ENCODE measurements at regions of chr1 and their contacts with region 1.

Region 1: GRCh38 chr1:215606564-215607168 is 39.6 kb downstream of the KCTD3 start:
- DNase-seq: no peak
- CTCF ChIP-seq: no peak

Region 2: DNA sequence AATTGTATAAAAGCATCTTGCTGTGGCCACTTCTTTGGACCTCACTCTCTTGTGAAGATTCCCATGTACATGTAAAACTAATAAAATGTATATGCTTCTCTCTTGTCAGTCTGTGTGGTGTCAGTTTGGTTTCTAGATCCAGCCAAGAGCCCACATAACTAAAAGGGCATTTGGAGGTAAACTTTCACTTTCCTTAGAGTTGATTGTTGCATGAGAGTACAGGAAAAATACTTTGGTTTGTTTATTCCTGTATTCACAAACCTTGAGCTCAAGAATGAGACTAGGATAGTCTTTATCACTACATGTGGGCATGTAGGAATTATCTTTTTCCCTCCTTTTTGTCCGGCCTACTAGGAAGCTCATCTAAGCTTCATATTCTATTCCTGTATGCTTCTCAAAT is 11.3 kb after region 1 on chr1:
- CTCF ChIA-PET with region 1: interaction called, 20 read pairs
- POLR2A ChIA-PET with region 1: no interaction called
- DNase-seq: no peak
- CTCF ChIP-seq: no peak

Region 3: DNA sequence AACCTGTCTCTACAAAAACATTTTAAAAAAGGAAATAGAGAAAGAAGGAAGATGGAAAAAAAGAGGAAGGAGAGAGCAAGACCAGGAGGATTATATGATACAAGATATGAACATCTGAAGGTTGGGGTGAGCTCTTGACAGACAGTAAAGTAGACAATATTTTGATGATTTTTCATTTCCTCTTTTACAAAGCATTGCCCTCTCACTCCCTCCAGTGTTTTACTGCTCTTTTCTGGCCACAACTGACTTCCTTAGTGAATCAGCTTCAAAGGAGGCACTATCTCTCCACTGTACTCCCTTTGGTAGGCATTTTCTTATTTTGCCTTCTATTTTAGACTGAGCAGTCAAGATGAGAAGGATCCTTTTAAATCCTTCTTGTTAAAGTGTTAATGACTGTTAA is 257.1 kb after region 1 on chr1:
- CTCF ChIA-PET with region 1: no interaction called
- POLR2A ChIA-PET with region 1: no interaction called
- DNase-seq: peak; percentile 4
- CTCF ChIP-seq: peak; percentile 6